ENCODE measurements at regions of chr12 and their contacts with region 1.

Region 1: GRCh38 chr12:49342066-49342913 is 4.4 kb upstream of the DNAJC22 start:
- DNase-seq: peak; percentile 90
- H3K4me3 Mint-ChIP-seq: peak overlapping the region; percentile 53
- H3K27ac Mint-ChIP-seq: no peak overlapping the region
- H3K4me1 Mint-ChIP-seq: peaks cover 43% of the 10 kb centered on the region
- H3K27me3 Mint-ChIP-seq: peaks cover 64% of the 10 kb centered on the region

Region 2: DNA sequence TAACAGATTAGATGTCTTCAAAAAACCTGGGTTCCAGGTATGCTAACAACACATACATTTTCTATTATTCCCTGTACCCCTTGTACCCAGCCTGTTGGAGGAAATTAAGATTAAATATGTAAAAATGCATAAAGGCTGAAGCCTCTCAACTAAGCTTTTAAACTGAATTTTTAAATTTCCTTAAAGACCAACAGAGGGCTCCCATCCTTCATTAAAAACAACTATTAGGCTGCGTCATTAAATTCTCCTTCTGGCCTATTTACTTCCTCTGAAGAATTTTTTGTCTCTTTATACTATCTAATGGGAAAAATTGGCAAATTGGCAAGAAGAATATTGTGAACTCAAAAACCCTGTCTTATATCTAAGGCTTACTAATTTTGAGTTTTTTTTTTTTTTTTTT is 1258.2 kb before region 1 on chr12:
- CTCF ChIA-PET with region 1: no interaction called
- POLR2A ChIA-PET with region 1: no interaction called
- intact Hi-C with region 1: no loop called
- DNase-seq: no peak
- H3K4me3 Mint-ChIP-seq: no peak overlapping the region
- H3K27ac Mint-ChIP-seq: no peak overlapping the region
- H3K4me1 Mint-ChIP-seq: no peaks in the 10 kb centered on the region
- H3K27me3 Mint-ChIP-seq: no peaks in the 10 kb centered on the region

Region 3: DNA sequence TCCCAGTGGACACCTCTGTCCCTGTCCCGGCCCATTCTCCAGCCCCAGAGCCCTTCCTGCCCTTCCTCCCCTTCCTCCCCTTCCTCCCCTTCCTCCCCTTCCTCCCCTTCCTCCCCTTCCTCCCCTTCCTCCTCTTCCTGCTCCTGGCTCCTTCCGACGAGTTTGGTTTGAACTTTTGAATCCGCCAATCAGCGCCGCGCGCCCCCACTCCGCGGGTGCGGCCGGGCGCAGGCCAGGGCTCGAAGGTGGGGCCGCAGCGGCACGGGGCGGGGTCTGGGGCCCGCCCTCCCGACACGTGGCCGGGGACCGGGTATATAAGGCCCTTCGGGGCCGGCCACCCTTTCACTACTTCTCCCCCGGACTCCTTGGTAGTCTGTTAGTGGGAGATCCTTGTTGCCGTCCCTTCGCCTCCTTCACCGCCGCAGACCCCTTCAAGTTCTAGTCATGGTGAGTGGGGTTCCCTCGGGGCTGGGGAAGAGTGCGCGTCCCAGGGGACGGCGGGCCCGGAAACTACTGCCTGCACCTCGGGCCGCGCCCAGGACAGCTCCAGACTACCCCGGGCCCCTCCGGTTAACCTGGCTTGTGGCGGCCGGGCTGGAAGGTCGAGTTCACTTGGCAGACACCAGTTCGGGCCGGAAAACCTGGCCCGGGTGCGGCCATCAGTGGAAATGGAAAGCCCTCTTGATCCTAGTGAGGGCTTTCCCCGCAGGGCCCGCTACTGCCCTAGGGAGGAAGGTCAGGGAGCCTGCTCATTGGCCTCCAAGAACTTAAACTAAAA is 77.4 kb before region 1 on chr12 and contains the start of gene TUBA1C:
- CTCF ChIA-PET with region 1: interaction called, 10 read pairs
- POLR2A ChIA-PET with region 1: interaction called, 4 read pairs
- intact Hi-C with region 1: no loop called
- DNase-seq: peak; percentile 93
- H3K4me3 Mint-ChIP-seq: peak within 1 kb of the TSS; percentile 99
- H3K27ac Mint-ChIP-seq: peak within 1 kb of the TSS; percentile 99
- H3K4me1 Mint-ChIP-seq: peaks cover 47% of the 10 kb centered on the region
- H3K27me3 Mint-ChIP-seq: no peaks in the 10 kb centered on the region
- total RNA-seq, gene TUBA1C: 353 to 360 TPM

Region 4: GRCh38 chr12:49296034-49296835 is 46.1 kb before region 1 on chr12:
- CTCF ChIA-PET with region 1: interaction called, 234 read pairs
- POLR2A ChIA-PET with region 1: interaction called, 7 read pairs
- intact Hi-C with region 1: loop called (anchors 2 kb)
- DNase-seq: peak; percentile 75
- H3K4me3 Mint-ChIP-seq: no peak overlapping the region
- H3K27ac Mint-ChIP-seq: no peak overlapping the region
- H3K4me1 Mint-ChIP-seq: peaks cover 12% of the 10 kb centered on the region
- H3K27me3 Mint-ChIP-seq: peaks cover 51% of the 10 kb centered on the region

Region 5: GRCh38 chr12:49322708-49323523 is 19.4 kb before region 1 on chr12 and contains the start of gene TROAP:
- CTCF ChIA-PET with region 1: interaction called, 44 read pairs
- POLR2A ChIA-PET with region 1: interaction called, 7 read pairs
- intact Hi-C with region 1: loop called (anchors 2 kb)
- DNase-seq: peak; percentile 99
- H3K4me3 Mint-ChIP-seq: peak within 1 kb of the TSS; percentile 99
- H3K27ac Mint-ChIP-seq: peak within 1 kb of the TSS; percentile 90
- H3K4me1 Mint-ChIP-seq: peaks cover 19% of the 10 kb centered on the region
- H3K27me3 Mint-ChIP-seq: no peaks in the 10 kb centered on the region
- total RNA-seq, gene TROAP: 57.7 to 64.9 TPM

Region 6: GRCh38 chr12:49366652-49367380 is 24.5 kb after region 1 on chr12:
- CTCF ChIA-PET with region 1: interaction called, 98 read pairs
- POLR2A ChIA-PET with region 1: interaction called, 10 read pairs
- intact Hi-C with region 1: no loop called
- DNase-seq: peak; percentile 93
- H3K4me3 Mint-ChIP-seq: peak overlapping the region; percentile 95
- H3K27ac Mint-ChIP-seq: peak overlapping the region; percentile 95
- H3K4me1 Mint-ChIP-seq: peaks cover 23% of the 10 kb centered on the region
- H3K27me3 Mint-ChIP-seq: no peaks in the 10 kb centered on the region

Region 7: DNA sequence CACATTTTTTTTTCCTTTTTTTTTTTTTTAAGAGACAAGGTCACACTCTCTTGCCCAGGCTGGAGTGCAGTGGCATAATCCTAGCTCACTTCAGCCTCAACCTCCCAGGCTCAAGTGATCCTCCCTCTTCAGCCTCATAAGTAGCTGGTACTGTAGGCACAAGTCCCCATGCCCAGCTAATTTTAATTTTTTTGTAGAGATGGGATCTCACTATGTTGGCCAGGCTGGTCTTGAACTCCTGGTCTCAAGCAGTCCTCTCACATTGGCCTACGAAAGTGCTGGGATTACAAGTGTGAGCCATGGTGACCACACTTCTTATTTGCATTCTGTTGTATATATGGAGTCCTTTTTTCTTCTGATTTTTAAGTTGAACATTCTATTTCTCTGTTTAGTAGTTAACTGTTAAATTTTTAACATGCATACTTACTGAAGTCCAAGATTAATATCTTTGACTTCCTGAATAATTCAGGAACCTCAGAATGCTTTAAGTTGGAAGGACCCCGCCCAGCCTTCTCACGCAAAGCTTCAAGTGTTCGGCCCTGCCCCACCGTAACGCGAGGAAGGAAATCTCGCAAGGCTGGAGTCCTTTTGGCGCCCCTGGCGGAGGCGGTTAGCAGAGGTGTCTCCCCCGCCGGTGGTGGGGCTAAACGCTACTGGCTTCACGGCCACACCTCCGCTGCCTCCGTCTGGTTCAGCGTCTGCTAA is 46.5 kb after region 1 on chr12:
- CTCF ChIA-PET with region 1: no interaction called
- POLR2A ChIA-PET with region 1: no interaction called
- intact Hi-C with region 1: no loop called
- DNase-seq: peak; percentile 74
- H3K4me3 Mint-ChIP-seq: no peak overlapping the region
- H3K27ac Mint-ChIP-seq: no peak overlapping the region
- H3K4me1 Mint-ChIP-seq: no peaks in the 10 kb centered on the region
- H3K27me3 Mint-ChIP-seq: no peaks in the 10 kb centered on the region

Measured in activated CD4-positive, alpha-beta memory T cell treated with anti-CD3 and anti-CD28 coated beads for 36 hours (primary cell).